ENCODE measurements at regions of chr13 and their contacts with region 1.

Region 1: GRCh38 chr13:31161828-31162590 is at the start of gene HSPH1:
- DNase-seq: peak; percentile 99 to 100
- ATAC-seq: peak; percentile 99
- H3K4me3 ChIP-seq: peak within 1 kb of the TSS; percentile 60 to 68
- H3K27ac ChIP-seq: peak within 1 kb of the TSS; percentile 35 to 87
- H3K4me1 ChIP-seq: no peaks in the 10 kb centered on the region
- H3K27me3 ChIP-seq: no peaks in the 10 kb centered on the region
- total RNA-seq, gene HSPH1: 50.6 to 81.1 TPM

Region 2: DNA sequence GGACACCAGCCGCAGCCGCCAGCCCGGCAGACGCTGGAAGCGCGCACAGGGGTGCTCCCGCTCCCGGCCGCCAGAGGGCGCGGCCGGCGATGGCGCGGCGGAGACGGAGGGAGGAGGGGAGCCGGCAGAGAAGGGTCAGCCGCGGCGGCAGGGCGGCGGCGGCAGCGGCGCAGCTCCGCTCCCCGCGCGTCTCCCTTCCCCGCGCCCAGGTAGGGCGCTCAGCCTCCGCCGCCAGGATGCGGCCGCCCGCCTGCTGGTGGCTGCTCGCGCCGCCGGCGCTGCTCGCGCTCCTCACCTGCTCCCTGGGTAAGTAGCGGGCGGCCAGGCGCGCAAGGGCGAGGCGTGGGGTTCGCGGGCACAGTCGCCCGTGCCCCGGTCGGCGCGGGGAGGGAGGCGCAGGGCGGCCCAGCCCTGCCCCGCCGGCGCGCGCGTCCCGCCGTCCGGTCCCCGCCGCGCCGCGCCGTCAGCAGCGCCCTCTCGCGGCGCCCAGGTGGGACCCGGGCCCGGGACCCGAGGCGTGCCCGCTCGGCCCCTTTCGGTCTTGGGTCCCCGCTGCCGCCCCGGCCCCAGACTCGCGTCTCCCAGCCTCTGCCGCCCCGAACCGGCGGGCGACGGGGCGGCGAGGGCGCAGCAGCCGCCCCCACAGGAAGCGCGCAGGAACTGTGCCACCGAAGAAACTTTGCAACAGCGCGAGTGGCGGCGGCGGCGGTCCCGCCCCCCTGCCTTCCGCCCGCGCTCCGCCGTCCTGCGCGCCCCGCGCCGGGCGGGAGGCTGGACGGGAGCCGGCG is 38.0 kb after region 1 on chr13 and contains the start of gene B3GLCT:
- intact Hi-C with region 1: loop called in 1 of 2 experiments (anchors 2 kb)
- DNase-seq: peak; percentile 84 to 94
- ATAC-seq: peak; percentile 95
- H3K4me3 ChIP-seq: peak within 1 kb of the TSS; percentile 90 to 91
- H3K27ac ChIP-seq: peak within 1 kb of the TSS; percentile 83 to 87
- H3K4me1 ChIP-seq: no peaks in the 10 kb centered on the region
- H3K27me3 ChIP-seq: no peaks in the 10 kb centered on the region
- total RNA-seq, gene B3GLCT: 7.8 to 8.3 TPM

Region 3: GRCh38 chr13:31227063-31227462 is 65.1 kb after region 1 on chr13:
- intact Hi-C with region 1: no loop called
- DNase-seq: no peak
- ATAC-seq: no peak
- H3K4me3 ChIP-seq: no peak overlapping the region
- H3K27ac ChIP-seq: no peak overlapping the region
- H3K4me1 ChIP-seq: no peaks in the 10 kb centered on the region
- H3K27me3 ChIP-seq: no peaks in the 10 kb centered on the region